GM12878 (cell line): ENCODE measurements at regions of chr12 and their contacts with region 1.

Region 1: GRCh38 chr12:91628366-91629055 is 445.9 kb upstream of the DCN start:
- DNase-seq: no peak
- ATAC-seq: peak; percentile 34; the same call in 2 of the 3 replicates
- H3K4me3 ChIP-seq: no peak overlapping the region
- H3K27ac ChIP-seq: no peak overlapping the region
- H3K4me1 ChIP-seq: no peaks in the 10 kb centered on the region
- H3K27me3 ChIP-seq: no peaks in the 10 kb centered on the region
- CTCF ChIP-seq: no peak
- EP300 ChIP-seq: no peak
- POLR2A ChIP-seq: no peak
- RAD21 ChIP-seq: no peak

Region 2: DNA sequence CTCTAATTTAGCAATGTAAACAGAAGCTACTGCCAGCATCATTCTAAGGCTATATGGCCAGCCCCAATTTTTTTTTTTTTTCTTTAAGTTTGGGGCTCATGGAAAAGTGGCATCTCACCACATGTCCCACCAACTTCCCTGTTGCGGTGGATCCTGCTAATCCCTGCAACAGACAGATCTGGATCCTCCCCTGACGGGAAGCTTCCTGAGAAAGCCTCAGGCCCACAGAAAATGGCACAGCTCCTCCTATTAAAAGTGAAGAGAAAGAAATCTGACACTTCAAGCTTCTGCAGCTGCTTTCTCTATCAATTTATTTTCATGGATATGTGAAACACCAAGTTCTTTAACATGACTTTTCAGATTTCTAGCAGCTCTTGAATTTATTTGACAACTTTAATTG is 12.1 kb before region 1 on chr12:
- CTCF ChIA-PET with region 1: interaction called, 4 read pairs
- POLR2A ChIA-PET with region 1: no interaction called
- RAD21 ChIA-PET with region 1: no interaction called
- SMC1A ChIA-PET with region 1: interaction called, 11 read pairs
- in situ Hi-C with region 1: no loop called
- intact Hi-C with region 1: no loop called
- DNase-seq: no peak
- ATAC-seq: no peak
- H3K4me3 ChIP-seq: no peak overlapping the region
- H3K27ac ChIP-seq: no peak overlapping the region
- H3K4me1 ChIP-seq: no peaks in the 10 kb centered on the region
- H3K27me3 ChIP-seq: no peaks in the 10 kb centered on the region
- CTCF ChIP-seq: no peak
- EP300 ChIP-seq: no peak
- POLR2A ChIP-seq: no peak
- RAD21 ChIP-seq: no peak